Tibial artery (tissue), 4 donors: ENCODE measurements at regions of chr20 and their contacts with region 1.

Region 1: DNA sequence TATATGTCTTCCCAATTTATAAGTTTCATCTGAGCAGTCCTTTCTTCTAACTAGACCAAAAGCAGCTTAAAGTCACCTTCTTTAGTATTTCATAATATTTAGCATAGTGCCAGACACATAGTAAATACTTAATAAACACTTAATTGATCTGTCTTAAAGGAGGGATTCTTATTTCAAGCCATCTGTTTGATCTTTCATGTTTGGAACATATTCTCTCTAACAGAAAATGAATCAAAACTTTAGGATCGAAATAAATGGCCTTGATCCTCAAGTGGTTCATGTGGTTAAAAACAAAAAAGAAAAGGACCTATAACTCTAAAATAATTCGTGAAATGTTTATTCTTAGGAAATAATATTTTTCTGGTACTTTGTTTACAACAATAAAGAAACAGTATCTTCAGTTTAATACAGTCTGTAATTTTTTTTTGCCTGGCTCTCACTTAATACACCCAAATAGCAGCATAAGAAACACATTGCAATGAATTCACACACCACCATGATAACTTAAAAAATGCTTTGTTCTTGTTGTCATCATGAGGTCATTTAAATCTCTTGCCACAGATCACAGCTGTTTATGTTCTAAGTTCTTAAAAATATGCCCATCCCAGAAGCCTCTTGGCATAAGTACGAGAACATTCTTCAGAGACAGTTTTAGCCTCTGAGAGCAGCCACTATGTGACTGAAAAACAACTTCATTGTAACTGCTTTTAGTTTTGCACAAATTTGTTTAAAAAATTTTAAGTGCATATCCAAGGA is 48.1 kb downstream of the ESF1 start:
- DNase-seq: no peak
- H3K4me3 ChIP-seq: no peak overlapping the region
- H3K27ac ChIP-seq: peak overlapping the region; percentile 75 to 77
- H3K4me1 ChIP-seq: peaks cover 0 to 59% (median 7%) of the 10 kb centered on the region in 4 donors
- H3K27me3 ChIP-seq: no peaks in the 10 kb centered on the region
- CTCF ChIP-seq: no peak

Region 2: DNA sequence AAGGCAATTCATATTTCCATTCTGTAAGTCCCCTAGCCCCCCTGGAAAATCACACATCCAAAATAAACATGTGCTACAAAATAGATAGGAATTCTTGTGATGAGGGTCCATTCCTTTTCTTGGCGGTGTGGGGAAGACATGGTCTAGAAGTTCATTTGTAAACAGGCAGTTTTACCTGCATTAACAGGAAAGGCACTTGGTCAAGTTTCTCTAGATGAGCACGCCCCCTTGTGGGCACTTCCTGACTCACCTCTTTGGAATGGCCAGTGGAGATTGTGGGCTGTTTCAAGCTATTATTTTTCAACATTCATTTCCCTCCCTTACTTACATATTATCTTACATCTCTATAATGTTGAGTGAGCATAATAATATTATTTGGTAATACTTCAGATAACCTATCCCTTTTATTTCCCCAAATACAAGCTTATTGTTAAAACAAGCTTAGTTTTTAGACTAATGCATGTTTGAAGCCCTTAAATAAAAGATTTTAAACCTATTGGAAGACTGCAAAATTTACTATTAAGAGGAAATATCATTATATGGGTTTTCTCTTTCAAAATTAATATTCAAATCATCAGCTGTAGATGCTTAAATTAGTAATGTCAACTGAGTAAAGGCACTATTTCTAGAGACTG is 190.0 kb before region 1 on chr20:
- intact Hi-C with region 1: no loop called
- DNase-seq: peak; percentile 85 to 87
- H3K4me3 ChIP-seq: no peak overlapping the region
- H3K27ac ChIP-seq: no peak overlapping the region
- H3K4me1 ChIP-seq: peaks cover 0 to 18% (median 8%) of the 10 kb centered on the region in 4 donors
- H3K27me3 ChIP-seq: no peaks in the 10 kb centered on the region
- CTCF ChIP-seq: peak; percentile 61 to 65

Region 3: DNA sequence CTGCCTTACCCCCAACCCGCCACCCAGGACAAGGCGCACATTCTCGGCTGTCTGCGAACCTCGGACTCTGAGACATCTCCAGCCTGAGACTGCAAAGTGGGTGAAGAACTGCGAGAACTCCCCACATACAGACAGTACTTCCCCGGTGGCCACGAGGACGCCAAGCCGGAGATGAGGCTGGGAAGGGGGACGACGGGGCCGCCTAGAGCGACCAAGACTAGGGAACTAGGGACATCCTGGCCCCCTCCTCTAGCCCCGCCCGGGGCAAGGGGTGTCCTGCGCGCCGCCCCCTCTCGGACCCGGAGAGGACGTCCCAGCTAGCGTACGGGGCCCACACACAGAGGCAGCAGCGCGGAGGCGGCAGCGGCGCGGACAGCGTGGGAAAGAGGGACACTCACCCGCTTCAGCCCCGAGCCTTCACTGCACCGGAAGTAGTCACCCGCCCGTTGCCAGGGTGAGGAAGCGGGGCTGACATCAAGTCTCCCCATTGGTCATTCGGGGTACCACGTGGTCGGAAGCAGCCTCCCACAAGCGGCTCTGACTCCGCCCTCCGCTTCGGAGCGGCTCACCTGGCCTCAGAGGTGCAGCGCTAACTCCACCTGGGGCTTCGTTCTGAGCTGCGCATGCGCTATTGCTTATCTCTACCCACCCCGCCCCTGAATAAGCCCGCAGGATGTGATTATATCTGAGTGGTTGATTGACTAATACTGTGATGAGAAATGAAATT is 98.0 kb before region 1 on chr20 and contains the start of gene TASP1:
- intact Hi-C with region 1: loop called (anchors 10 kb)
- DNase-seq: peak; percentile 97
- H3K4me3 ChIP-seq: peak within 1 kb of the TSS; percentile 81 to 85
- H3K27ac ChIP-seq: peak within 1 kb of the TSS; percentile 87 to 93
- H3K4me1 ChIP-seq: peaks cover 0 to 14% (median 0%) of the 10 kb centered on the region in 4 donors
- H3K27me3 ChIP-seq: no peaks in the 10 kb centered on the region
- CTCF ChIP-seq: no peak